Posterior vena cava (tissue), 2 donors: ENCODE measurements at regions of chr1 and their contacts with region 1.

Region 1: DNA sequence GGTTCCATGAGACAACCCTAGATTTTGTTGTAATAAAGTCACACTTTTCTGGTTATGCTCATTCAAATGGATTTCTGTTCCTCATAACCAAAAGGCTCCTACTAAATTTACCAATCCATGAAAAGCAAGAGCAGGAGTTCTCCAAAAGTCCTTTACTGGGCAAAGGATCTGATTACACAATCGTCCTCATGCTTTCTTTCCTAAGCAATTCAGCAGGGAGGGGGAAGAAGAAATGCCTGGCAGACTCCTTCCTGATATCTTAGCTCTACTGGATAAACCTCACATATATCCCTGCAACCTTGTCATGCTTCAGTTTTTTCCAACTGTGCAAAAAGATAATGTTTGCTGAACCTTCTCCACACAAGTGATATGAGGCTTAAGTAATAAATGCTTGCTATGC is 67.6 kb upstream of the GUCA2B start:
- DNase-seq: no peak

Region 2: DNA sequence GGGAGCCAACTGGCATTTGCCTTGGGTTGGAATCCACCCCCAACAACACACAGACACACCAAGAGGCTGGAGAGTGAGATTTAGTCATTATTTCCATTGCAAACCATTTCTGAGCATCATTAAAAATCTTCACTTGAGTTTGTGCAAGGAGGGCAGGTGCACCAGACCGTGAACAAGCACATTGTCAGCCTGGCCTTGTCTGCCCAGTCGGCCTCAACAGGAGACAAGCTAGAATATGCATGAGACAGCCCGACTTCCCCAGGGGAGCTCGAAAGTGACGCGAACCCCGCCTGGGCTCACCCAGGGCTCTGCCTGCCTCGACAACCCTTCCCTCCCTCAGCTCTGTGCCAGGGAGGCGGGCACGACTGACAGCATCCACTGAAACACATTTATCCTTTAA is 52.2 kb after region 1 on chr1:
- intact Hi-C with region 1: loop called in 1 of 2 experiments (anchors 2 kb)
- DNase-seq: no peak